A673 (cell line): ENCODE measurements at regions of chr11 and their contacts with region 1.

Region 1: DNA sequence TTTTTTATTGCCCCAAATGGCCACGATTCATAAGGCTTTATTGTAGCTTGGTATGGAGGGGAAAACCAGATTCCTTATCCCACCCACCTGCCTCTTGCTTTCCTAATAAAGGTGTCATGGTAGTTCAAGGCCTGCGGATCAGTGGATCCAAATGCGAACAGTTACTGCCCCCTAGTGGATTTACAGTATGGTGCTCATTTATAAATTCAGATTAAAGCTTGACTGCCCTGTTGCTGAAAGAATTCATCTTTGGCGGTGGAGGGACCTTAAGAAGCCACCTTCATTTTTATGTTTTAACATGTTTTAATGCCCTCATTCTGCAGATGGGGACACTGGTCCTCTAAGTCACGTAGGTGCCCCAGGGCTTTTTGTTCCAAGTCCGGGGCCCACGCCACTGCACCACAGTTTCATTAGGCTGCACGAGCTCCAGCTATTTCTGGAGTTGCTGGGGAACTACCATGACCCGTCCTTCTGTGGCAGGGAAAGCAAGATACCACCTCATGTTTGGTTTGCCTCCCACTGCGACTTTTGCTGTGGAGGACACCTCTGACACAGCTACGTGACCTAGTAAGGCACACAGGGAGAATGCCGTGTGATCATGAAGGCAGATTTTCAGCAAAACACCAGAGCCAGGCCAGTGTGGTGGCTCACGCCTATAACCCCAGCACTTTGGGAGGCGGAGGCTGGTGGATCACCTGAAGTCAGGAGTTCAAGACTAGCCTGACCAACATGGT is 15.6 kb upstream of the INCENP start:
- DNase-seq: peak; percentile 84
- H3K4me3 ChIP-seq: no peak overlapping the region
- H3K27ac ChIP-seq: no peak overlapping the region
- H3K4me1 ChIP-seq: peaks cover 3% of the 10 kb centered on the region
- H3K27me3 ChIP-seq: no peaks in the 10 kb centered on the region
- CTCF ChIP-seq: peak; percentile 91

Region 2: DNA sequence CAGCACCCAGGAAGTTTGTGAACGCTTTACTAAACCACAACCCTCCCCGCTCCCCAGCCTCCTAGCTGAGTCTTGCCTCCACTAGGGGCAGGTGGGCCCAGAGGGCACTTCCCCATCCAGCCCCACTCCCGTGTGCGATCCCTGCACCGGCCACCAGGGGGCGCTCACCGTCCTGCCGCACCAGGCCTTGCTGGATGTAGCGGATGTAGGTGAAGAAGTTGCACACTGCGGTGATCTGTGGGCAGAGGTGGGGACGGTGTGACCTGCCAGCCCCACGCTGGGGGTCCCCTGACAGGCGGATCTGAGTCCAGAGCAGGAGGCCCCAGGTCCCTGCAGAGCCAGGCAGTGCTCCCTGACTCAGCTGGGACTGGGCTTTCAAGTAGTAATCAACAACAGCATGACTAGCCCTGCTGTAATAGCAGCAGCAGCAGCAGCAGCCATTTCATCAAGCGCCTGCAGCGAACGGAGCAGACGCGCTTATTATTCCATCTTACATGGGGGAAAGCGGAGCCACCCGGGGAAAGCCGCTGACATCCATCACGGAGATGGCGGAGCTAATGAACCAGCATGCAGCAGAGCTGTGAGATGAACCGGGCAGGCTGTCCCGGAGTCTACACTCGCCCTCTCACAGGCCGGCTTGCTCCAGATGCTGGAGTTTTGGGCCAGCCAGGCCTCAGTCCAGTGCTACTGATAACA is 208.9 kb before region 1 on chr11:
- CTCF ChIA-PET with region 1: interaction called, 63 read pairs
- POLR2A ChIA-PET with region 1: no interaction called
- intact Hi-C with region 1: loop called (anchors 1 kb)
- DNase-seq: peak; percentile 91
- H3K4me3 ChIP-seq: no peak overlapping the region
- H3K27ac ChIP-seq: peak overlapping the region; percentile 48
- H3K4me1 ChIP-seq: peaks cover 5% of the 10 kb centered on the region
- H3K27me3 ChIP-seq: no peaks in the 10 kb centered on the region
- CTCF ChIP-seq: peak; percentile 100

Region 3: GRCh38 chr11:62061351-62062222 is 46.6 kb before region 1 on chr11:
- CTCF ChIA-PET with region 1: no interaction called
- POLR2A ChIA-PET with region 1: no interaction called
- intact Hi-C with region 1: no loop called
- DNase-seq: no peak
- H3K4me3 ChIP-seq: no peak overlapping the region
- H3K27ac ChIP-seq: no peak overlapping the region
- H3K4me1 ChIP-seq: no peaks in the 10 kb centered on the region
- H3K27me3 ChIP-seq: no peaks in the 10 kb centered on the region
- CTCF ChIP-seq: no peak